ENCODE measurements at regions of chr7 and their contacts with region 1.

Region 1: GRCh38 chr7:37181550-37181932 is 267.1 kb downstream of the ELMO1 start:
- DNase-seq: no peak

Region 2: GRCh38 chr7:36473454-36474282 is 707.9 kb before region 1 on chr7:
- CTCF ChIA-PET with region 1: interaction called, 14 read pairs
- POLR2A ChIA-PET with region 1: no interaction called
- DNase-seq: peak; percentile 59

Region 3: GRCh38 chr7:36967387-36967786 is 214.2 kb before region 1 on chr7:
- CTCF ChIA-PET with region 1: interaction called, 35 read pairs
- POLR2A ChIA-PET with region 1: no interaction called
- DNase-seq: peak; percentile 74

Region 4: GRCh38 chr7:36986429-36987362 is 194.8 kb before region 1 on chr7:
- CTCF ChIA-PET with region 1: interaction called, 23 read pairs
- POLR2A ChIA-PET with region 1: no interaction called
- DNase-seq: peak; percentile 83

Region 5: DNA sequence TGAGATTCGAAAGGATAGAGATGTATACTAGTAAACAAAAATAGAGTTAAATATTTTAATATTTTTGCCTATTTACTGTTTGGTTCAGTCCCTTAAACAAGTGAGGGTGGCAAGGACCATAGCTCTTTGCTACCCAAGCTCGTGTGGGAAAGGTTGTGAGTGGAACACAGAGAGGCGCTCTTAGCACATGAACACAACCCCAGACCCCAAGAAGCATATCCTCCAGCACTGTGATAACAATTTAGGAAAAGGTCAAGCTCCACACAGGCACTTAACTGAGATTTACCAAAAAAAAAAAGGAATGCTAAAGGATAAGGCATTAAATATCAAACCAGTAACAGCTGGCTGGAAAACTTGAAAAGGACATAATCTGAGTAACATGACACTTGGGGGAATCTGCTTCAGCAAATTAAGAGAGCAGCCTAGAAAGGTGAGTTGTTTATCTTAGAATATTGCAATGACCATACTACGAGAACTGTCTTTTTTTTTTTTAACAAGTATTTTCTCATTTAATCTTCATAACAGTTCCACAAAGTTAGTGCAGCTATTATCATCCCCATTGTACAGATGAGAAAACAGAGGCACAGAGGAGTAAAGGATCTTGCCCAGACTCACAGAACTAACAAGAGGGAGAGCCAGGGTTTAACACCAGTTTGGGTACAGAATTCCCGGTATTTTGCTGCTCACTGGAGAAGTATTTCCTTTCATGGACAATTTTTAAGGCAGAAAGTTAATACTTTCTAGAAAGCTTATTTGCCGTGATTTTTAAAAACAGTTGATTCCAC is 153.8 kb before region 1 on chr7:
- CTCF ChIA-PET with region 1: interaction called, 16 read pairs
- POLR2A ChIA-PET with region 1: no interaction called
- DNase-seq: no peak

Region 6: DNA sequence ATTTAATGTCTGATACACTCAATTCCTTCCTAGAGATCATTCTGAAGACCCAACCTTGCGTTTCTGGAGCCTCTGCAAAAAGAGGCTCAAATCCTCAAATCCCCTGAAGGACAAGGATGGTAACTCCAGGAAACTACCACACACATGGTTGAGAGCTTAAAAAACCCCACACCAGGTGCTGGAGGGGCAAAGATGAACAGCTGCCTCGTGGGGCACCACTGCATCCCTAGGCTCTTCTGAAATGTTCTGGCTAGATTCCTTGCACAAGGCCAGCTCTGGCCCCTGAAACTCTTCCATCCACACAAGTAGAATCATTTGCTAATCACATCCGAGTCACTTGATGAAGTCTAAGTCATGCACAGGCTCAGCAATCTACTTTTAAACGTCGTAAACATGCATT is 19.4 kb before region 1 on chr7:
- CTCF ChIA-PET with region 1: no interaction called
- POLR2A ChIA-PET with region 1: no interaction called
- DNase-seq: no peak